ENCODE measurements at regions of chr19 and their contacts with region 1.

Region 1: GRCh38 chr19:28710278-28710677 is 502.7 kb downstream of the UQCRFS1 start:
- DNase-seq: peak in 4 of 5 donors; percentile 22 to 39 (median 25)
- H3K4me3 ChIP-seq: no peak overlapping the region
- H3K4me3 Mint-ChIP-seq: no peak overlapping the region
- H3K27ac ChIP-seq: no peak overlapping the region
- H3K27ac Mint-ChIP-seq: no peak overlapping the region
- H3K4me1 ChIP-seq: no peaks in the 10 kb centered on the region
- H3K4me1 Mint-ChIP-seq: no peaks in the 10 kb centered on the region
- H3K27me3 ChIP-seq: no peaks in the 10 kb centered on the region
- H3K27me3 Mint-ChIP-seq: peaks cover 0 to 2% of the 10 kb centered on the region in 2 donors

Region 2: GRCh38 chr19:27966390-27966816 is 743.9 kb before region 1 on chr19:
- CTCF ChIA-PET with region 1: no interaction called
- POLR2A ChIA-PET with region 1: no interaction called
- intact Hi-C with region 1: loop called (anchors 10 kb)
- DNase-seq: peak in 2 of 5 donors; percentile 1
- H3K4me3 ChIP-seq: no peak overlapping the region
- H3K4me3 Mint-ChIP-seq: no peak overlapping the region
- H3K27ac ChIP-seq: no peak overlapping the region
- H3K27ac Mint-ChIP-seq: no peak overlapping the region
- H3K4me1 ChIP-seq: no peaks in the 10 kb centered on the region
- H3K4me1 Mint-ChIP-seq: no peaks in the 10 kb centered on the region
- H3K27me3 ChIP-seq: no peaks in the 10 kb centered on the region
- H3K27me3 Mint-ChIP-seq: peaks cover 3 to 4% of the 10 kb centered on the region in 2 donors

Region 3: GRCh38 chr19:28934631-28935030 is 224.4 kb after region 1 on chr19:
- CTCF ChIA-PET with region 1: no interaction called
- POLR2A ChIA-PET with region 1: no interaction called
- intact Hi-C with region 1: no loop called
- DNase-seq: no peak
- H3K4me3 ChIP-seq: no peak overlapping the region
- H3K4me3 Mint-ChIP-seq: no peak overlapping the region
- H3K27ac ChIP-seq: no peak overlapping the region
- H3K27ac Mint-ChIP-seq: no peak overlapping the region
- H3K4me1 ChIP-seq: no peaks in the 10 kb centered on the region
- H3K4me1 Mint-ChIP-seq: no peaks in the 10 kb centered on the region
- H3K27me3 ChIP-seq: no peaks in the 10 kb centered on the region
- H3K27me3 Mint-ChIP-seq: peaks cover 0 to 1% of the 10 kb centered on the region in 2 donors

Measured in CD4-positive, alpha-beta memory T cell (primary cell).